Natural killer cell (primary cell): ENCODE measurements at regions of chr20 and their contacts with region 1.

Region 1: GRCh38 chr20:63272584-63273579 is at the start of gene ARFGAP1:
- DNase-seq: peak; percentile 87 to 94
- ATAC-seq: peak; percentile 95 to 99 (median 97)
- H3K4me3 ChIP-seq: peak within 1 kb of the TSS; percentile 67
- H3K4me3 Mint-ChIP-seq: peak within 1 kb of the TSS; percentile 93
- H3K27ac ChIP-seq: no peak within 1 kb of the TSS
- H3K27ac Mint-ChIP-seq: peak within 1 kb of the TSS; percentile 78 to 88
- H3K4me1 ChIP-seq: peaks cover 21% of the 10 kb centered on the region
- H3K4me1 Mint-ChIP-seq: peaks cover 36 to 38% of the 10 kb centered on the region in 2 donors
- H3K27me3 ChIP-seq: no peaks in the 10 kb centered on the region
- H3K27me3 Mint-ChIP-seq: peaks cover 0 to 4% of the 10 kb centered on the region in 2 donors
- CTCF ChIP-seq: no peak
- total RNA-seq, gene ARFGAP1: 118 to 138 (median 127) TPM

Region 2: GRCh38 chr20:63172720-63173119 is 100.2 kb before region 1 on chr20:
- intact Hi-C with region 1: no loop called
- DNase-seq: peak in 1 of 2 donors; percentile 32
- ATAC-seq: no peak
- H3K4me3 ChIP-seq: no peak overlapping the region
- H3K4me3 Mint-ChIP-seq: no peak overlapping the region
- H3K27ac ChIP-seq: no peak overlapping the region
- H3K27ac Mint-ChIP-seq: no peak overlapping the region
- H3K4me1 ChIP-seq: no peaks in the 10 kb centered on the region
- H3K4me1 Mint-ChIP-seq: peaks cover 0 to 6% of the 10 kb centered on the region in 2 donors
- H3K27me3 ChIP-seq: peaks cover 21% of the 10 kb centered on the region
- H3K27me3 Mint-ChIP-seq: peaks cover 20 to 31% of the 10 kb centered on the region in 2 donors
- CTCF ChIP-seq: no peak

Region 3: DNA sequence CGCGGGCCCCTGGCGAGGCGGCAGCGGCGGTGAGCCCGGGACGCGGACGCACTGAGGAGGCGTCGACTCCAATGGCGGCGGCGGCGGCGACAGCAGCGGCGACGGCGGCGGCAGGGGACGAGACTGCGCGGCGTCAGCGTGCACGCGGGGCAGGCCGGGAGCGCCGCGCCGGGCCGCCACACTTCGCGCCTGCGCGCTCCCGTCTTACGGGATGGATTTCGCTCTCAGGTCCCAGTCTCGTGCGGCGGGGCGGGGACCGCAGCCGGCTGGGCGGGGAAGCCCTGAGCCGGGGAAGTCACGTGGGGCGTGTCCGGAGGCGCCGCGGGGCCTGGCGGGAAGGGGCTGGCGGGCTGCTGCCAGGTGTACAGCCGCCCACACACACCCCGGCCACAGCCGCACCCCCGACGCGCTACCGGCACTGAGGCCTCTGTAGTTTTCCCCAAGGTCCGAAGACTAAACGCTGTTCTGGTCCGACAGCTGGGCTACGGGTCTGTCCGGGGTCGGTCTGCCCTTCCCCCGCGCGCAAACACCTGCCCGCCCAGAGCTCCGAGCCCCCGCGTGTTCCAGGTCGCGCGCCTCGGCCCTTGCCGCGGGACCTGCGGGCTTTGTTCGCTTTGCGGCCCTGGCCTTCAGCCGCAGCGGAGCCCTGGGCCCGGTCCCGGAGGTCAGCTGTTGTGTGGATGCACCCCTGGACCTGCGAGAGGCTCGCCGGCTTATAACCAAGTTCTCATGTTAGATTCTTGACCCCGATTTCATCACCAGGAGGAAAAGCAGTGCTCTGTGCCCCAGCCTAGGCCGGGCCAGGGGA is 56.6 kb before region 1 on chr20 and contains the start of gene YTHDF1:
- intact Hi-C with region 1: loop called (anchors 2 kb)
- DNase-seq: peak; percentile 94 to 98
- ATAC-seq: peak; percentile 92 to 96 (median 93)
- H3K4me3 ChIP-seq: peak within 1 kb of the TSS; percentile 60
- H3K4me3 Mint-ChIP-seq: peak within 1 kb of the TSS; percentile 90
- H3K27ac ChIP-seq: peak within 1 kb of the TSS; percentile 74
- H3K27ac Mint-ChIP-seq: peak within 1 kb of the TSS; percentile 85 to 90
- H3K4me1 ChIP-seq: peaks cover 35% of the 10 kb centered on the region
- H3K4me1 Mint-ChIP-seq: peaks cover 42 to 48% of the 10 kb centered on the region in 2 donors
- H3K27me3 ChIP-seq: no peaks in the 10 kb centered on the region
- H3K27me3 Mint-ChIP-seq: peaks cover 0 to 10% of the 10 kb centered on the region in 2 donors
- CTCF ChIP-seq: no peak
- total RNA-seq, gene YTHDF1: 39.1 to 43.1 (median 41.0) TPM

Region 4: DNA sequence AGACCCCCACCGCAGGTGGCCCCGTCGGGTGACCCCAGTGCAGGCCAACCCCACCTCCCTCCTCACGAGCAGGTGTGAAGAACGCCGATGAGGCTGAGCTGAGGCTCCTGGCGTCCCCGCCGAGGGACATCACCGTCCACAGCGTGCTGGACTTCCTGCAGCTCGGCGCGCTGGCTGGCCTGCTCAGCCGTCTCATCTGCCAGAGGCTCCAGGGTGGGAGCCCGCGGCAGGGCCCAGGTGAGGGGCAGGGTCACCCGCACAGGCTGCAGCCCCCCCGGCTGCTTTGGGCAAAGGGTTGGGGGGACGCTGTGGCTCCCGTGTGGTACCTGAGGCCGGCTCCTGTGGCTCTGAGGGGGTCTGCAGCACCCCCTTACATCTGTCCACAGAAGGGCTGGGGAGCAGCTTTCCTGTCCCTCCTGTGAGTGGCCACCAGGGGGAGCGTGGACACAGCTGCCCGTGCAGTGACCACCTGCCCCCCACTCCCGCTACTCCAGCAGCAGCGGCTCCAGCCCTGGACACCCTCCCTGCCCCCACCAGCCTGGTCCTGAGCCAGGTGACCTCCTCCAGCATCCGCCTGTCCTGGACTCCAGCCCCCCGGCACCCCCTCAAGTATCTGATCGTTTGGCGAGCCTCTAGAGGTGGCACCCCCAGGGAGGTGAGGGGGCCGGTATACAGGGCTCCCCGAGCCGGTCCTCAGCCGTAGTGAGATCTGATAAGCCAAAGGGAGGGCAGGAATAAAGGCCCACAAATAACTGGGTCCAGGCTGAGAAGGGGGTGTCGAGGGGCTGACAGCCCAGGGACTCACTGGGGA is 36.6 kb after region 1 on chr20:
- intact Hi-C with region 1: no loop called
- DNase-seq: peak in 1 of 2 donors; percentile 60
- ATAC-seq: peak in 2 of 3 donors; percentile 38 to 66
- H3K4me3 ChIP-seq: no peak overlapping the region
- H3K4me3 Mint-ChIP-seq: no peak overlapping the region
- H3K27ac ChIP-seq: no peak overlapping the region
- H3K27ac Mint-ChIP-seq: no peak overlapping the region
- H3K4me1 ChIP-seq: peaks cover 3% of the 10 kb centered on the region
- H3K4me1 Mint-ChIP-seq: no peaks in the 10 kb centered on the region
- H3K27me3 ChIP-seq: no peaks in the 10 kb centered on the region
- H3K27me3 Mint-ChIP-seq: peaks cover 0 to 6% of the 10 kb centered on the region in 2 donors
- CTCF ChIP-seq: peak; percentile 68